Activated CD4-positive, alpha-beta T cell treated with anti-CD3 and anti-CD28 coated beads for 36 hours (primary cell): ENCODE measurements at regions of chr4 and their contacts with region 1.

Region 1: DNA sequence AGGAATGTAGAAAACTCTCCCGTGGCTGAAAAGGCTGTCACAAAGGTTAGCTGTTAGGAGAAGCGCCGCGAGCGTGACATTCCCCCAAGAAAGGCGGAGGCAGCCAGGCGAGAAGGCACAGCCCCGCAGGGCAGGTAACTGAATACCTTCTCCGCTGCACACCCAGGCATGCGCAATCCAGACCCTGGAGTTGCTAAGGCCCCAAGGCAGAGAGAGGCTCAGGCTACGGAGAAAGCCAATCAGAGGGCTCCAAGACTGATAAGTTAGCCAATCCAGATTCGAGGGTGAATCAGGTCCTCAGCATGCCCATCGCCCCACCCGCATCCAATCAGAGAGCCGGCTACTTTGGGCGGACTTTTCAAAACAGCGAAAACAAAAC is 485 bp upstream of the CCNG2 start:
- DNase-seq: peak; percentile 95
- ATAC-seq: peak; percentile 98
- H3K4me3 Mint-ChIP-seq: peak overlapping the region; percentile 97
- H3K27ac Mint-ChIP-seq: peak overlapping the region; percentile 97
- H3K4me1 Mint-ChIP-seq: peaks cover 31% of the 10 kb centered on the region
- H3K27me3 Mint-ChIP-seq: no peaks in the 10 kb centered on the region

Region 2: DNA sequence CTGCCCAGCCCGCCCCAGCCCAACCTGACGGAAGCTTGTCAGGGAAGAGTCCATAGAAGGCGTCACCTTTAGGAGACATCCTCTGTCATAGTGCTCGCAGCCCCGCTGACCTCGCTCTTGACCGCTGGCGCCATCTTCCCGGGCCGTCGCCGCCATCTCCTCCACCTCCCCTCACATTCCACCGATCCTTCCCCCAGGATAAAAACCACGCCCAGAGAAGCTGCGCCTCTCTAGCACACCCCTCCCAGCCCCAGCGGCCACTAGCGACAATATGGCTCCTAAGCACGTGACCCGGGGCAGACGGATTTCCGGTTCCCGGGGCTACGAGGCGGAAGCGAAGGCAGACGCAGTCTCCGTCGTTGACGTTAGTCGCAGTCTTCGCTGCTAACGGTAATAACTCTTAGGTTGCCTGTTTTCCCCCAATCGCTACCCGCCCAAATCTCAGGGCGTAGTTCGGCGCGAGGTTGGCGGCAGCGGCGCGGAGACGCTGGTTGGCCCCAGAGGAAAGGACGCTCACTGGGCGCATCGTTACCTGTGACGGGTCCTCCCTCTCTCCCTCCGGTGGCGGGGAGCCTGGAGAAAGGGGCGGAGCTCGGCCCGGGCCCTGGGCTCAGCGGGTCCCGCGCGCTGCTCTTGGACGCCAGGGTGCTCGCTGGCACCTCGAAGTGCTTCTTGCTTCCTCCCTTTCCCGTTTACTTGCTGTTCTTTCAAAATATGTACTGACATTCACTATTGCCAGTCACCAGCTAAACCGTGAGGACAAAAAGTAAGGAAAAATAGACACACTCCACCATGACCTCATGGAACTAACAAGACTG is 1642.2 kb before region 1 on chr4 and contains the starts of genes RCHY1 and THAP6:
- CTCF ChIA-PET with region 1: no interaction called
- POLR2A ChIA-PET with region 1: no interaction called
- intact Hi-C with region 1: loop called in 1 of 2 experiments (anchors 10 kb)
- DNase-seq: peak; percentile 95
- ATAC-seq: peak; percentile 93
- H3K4me3 Mint-ChIP-seq: no peak within 1 kb of the TSS
- H3K27ac Mint-ChIP-seq: peak within 1 kb of the TSS; percentile 95
- H3K4me1 Mint-ChIP-seq: peaks cover 39% of the 10 kb centered on the region
- H3K27me3 Mint-ChIP-seq: no peaks in the 10 kb centered on the region
- total RNA-seq, gene RCHY1: 32.9 to 33.7 TPM
- total RNA-seq, gene THAP6: 18.4 TPM

Region 3: GRCh38 chr4:75940692-75941253 is 1215.7 kb before region 1 on chr4 and contains the start of gene NAAA:
- CTCF ChIA-PET with region 1: no interaction called
- POLR2A ChIA-PET with region 1: no interaction called
- intact Hi-C with region 1: loop called in 1 of 2 experiments (anchors 2 kb)
- DNase-seq: peak; percentile 87
- ATAC-seq: peak; percentile 85
- H3K4me3 Mint-ChIP-seq: peak within 1 kb of the TSS; percentile 97
- H3K27ac Mint-ChIP-seq: peak within 1 kb of the TSS; percentile 97
- H3K4me1 Mint-ChIP-seq: peaks cover 7% of the 10 kb centered on the region
- H3K27me3 Mint-ChIP-seq: no peaks in the 10 kb centered on the region
- total RNA-seq, gene NAAA: 21.2 to 26.8 TPM

Region 4: DNA sequence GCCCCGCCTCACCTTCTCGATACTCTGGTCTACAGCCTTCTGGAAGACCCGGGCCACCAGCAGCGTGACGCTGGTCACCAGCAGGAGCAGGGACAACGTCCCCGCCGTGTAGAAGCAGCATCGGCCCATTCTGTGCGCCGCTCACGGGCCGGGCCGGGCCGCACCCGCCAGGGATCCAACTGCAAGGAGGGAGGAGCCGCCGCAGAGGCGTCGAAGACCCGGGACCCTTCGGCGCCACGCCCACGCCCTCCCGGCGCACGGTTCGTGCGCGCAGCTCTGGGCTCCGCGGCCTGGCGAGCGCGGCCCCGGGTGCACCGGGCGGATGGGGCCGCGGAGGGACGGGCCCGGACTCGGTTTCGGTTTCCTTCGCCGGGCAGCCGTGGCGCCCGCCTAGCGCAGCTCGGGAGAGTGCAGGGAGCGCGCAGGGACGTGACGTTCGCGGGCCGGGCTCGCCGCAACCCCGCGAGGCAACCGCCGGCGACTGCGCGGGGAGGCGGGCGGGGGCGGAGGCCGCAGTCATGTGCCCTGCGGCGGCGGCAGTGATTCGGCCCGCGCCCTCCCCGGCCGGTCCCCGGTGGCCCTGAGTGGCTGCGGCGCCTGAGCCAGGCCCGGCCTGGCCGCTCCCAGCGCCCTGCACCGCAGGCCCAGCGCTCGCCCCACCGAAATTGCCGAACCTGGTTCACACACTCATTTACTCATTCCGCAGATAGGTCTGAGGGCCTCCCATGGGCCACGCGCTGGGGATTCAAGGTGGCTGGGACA is 942.9 kb before region 1 on chr4 and contains the start of gene SCARB2:
- CTCF ChIA-PET with region 1: no interaction called
- POLR2A ChIA-PET with region 1: no interaction called
- intact Hi-C with region 1: loop called in 1 of 2 experiments (anchors 10 kb)
- DNase-seq: peak; percentile 79
- ATAC-seq: peak; percentile 68
- H3K4me3 Mint-ChIP-seq: peak within 1 kb of the TSS; percentile 75
- H3K27ac Mint-ChIP-seq: peak within 1 kb of the TSS; percentile 78
- H3K4me1 Mint-ChIP-seq: peaks cover 32% of the 10 kb centered on the region
- H3K27me3 Mint-ChIP-seq: no peaks in the 10 kb centered on the region
- total RNA-seq, gene SCARB2: 3.3 to 4.6 TPM

Region 5: GRCh38 chr4:77193511-77194102 is 37.1 kb after region 1 on chr4:
- CTCF ChIA-PET with region 1: no interaction called
- POLR2A ChIA-PET with region 1: no interaction called
- intact Hi-C with region 1: loop called (anchors 1 to 2 kb)
- DNase-seq: peak; percentile 83
- ATAC-seq: peak; percentile 98
- H3K4me3 Mint-ChIP-seq: peak overlapping the region; percentile 60
- H3K27ac Mint-ChIP-seq: peak overlapping the region; percentile 44
- H3K4me1 Mint-ChIP-seq: peaks cover 25% of the 10 kb centered on the region
- H3K27me3 Mint-ChIP-seq: no peaks in the 10 kb centered on the region

Region 6: GRCh38 chr4:77586951-77587383 is 430.4 kb after region 1 on chr4:
- CTCF ChIA-PET with region 1: no interaction called
- POLR2A ChIA-PET with region 1: no interaction called
- intact Hi-C with region 1: loop called in 1 of 2 experiments (anchors 2 kb)
- DNase-seq: peak; percentile 87
- ATAC-seq: peak; percentile 94
- H3K4me3 Mint-ChIP-seq: peak overlapping the region; percentile 54
- H3K27ac Mint-ChIP-seq: peak overlapping the region; percentile 84
- H3K4me1 Mint-ChIP-seq: peaks cover 66% of the 10 kb centered on the region
- H3K27me3 Mint-ChIP-seq: peaks cover 16% of the 10 kb centered on the region

Region 7: DNA sequence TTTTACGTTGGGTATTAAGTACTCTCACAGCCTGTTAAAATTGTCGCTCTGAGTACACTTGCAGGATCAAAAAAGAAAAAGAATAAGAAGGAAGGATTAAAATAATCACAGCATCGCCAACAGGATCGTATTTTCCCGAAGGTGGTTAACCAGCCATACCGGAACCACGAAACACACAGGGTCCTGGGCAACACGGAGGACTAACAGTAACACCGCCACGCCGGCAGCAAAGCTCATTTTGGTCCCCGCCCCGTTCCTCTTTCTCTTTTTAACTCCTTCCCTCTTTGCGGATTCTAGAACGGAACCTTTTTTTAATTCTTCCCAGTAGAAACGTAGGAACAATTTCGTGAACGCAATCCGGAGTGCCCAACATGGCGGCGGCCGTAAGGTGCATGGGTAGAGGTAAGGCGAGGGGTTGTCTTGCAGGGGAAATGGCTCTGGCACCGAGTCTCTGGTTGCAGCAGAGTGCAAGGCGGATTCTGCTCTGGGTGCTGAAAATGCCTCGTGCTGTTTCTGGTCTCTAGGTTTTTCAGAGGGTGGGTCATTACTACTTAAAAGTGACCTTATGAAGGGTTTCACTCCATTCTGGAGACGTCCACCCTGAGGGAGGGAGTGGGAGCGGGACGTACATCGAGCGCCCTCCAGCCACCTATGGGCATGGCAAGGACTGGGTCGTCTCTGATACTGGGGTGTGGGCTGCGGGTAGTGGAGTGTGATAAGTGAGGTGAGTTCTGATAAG is 706.1 kb after region 1 on chr4 and contains the start of gene MRPL1:
- CTCF ChIA-PET with region 1: no interaction called
- POLR2A ChIA-PET with region 1: no interaction called
- intact Hi-C with region 1: loop called in 1 of 2 experiments (anchors 2 kb)
- DNase-seq: peak; percentile 92
- ATAC-seq: peak; percentile 78
- H3K4me3 Mint-ChIP-seq: peak within 1 kb of the TSS; percentile 98
- H3K27ac Mint-ChIP-seq: peak within 1 kb of the TSS; percentile 100
- H3K4me1 Mint-ChIP-seq: peaks cover 61% of the 10 kb centered on the region
- H3K27me3 Mint-ChIP-seq: peaks cover 2% of the 10 kb centered on the region
- total RNA-seq, gene MRPL1: 61.1 to 70.6 TPM